Activated CD4-positive, alpha-beta memory T cell treated with anti-CD3 and anti-CD28 coated beads for 36 hours (primary cell): ENCODE measurements at regions of chr2 and their contacts with region 1.

Region 1: DNA sequence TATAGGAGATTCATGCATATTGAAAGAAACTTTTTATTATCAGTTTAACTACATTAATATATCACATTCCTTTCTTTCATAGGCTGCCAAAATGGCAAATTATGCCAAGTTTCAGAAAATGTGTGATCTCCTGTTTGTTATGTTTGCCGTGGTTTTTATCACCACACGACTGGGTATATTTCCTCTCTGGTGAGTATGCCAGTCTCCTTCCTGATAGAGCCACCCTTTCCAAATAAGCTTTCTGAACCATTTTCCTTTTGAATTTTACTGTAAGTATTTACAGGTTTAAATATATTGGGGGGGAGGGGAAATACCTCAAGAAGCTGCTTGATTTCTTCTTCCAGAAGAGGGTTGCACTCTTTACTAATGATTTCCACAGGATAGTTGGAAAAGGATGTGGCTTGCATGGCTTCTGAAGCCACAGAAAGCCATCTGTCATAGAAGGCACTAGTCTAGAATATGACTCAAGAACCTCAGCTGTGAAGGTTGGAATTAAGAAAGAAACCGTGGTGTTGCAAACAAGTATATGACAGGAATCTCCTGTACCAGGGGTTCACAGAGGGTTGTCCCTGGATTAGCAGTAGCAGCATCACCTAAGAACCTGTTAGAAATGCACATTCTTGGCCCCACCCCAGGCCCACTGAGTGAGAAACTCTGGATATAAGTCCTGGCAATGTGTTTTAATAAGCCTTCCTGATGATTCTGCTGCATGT is 84.5 kb upstream of the NOSTRIN start:
- DNase-seq: peak; percentile 29
- H3K4me3 Mint-ChIP-seq: no peak overlapping the region
- H3K27ac Mint-ChIP-seq: no peak overlapping the region
- H3K4me1 Mint-ChIP-seq: peaks cover 21% of the 10 kb centered on the region
- H3K27me3 Mint-ChIP-seq: no peaks in the 10 kb centered on the region

Region 2: GRCh38 chr2:168699844-168700417 is 18.0 kb before region 1 on chr2:
- CTCF ChIA-PET with region 1: no interaction called
- POLR2A ChIA-PET with region 1: no interaction called
- intact Hi-C with region 1: no loop called
- DNase-seq: no peak
- H3K4me3 Mint-ChIP-seq: no peak overlapping the region
- H3K27ac Mint-ChIP-seq: no peak overlapping the region
- H3K4me1 Mint-ChIP-seq: no peaks in the 10 kb centered on the region
- H3K27me3 Mint-ChIP-seq: no peaks in the 10 kb centered on the region

Region 3: DNA sequence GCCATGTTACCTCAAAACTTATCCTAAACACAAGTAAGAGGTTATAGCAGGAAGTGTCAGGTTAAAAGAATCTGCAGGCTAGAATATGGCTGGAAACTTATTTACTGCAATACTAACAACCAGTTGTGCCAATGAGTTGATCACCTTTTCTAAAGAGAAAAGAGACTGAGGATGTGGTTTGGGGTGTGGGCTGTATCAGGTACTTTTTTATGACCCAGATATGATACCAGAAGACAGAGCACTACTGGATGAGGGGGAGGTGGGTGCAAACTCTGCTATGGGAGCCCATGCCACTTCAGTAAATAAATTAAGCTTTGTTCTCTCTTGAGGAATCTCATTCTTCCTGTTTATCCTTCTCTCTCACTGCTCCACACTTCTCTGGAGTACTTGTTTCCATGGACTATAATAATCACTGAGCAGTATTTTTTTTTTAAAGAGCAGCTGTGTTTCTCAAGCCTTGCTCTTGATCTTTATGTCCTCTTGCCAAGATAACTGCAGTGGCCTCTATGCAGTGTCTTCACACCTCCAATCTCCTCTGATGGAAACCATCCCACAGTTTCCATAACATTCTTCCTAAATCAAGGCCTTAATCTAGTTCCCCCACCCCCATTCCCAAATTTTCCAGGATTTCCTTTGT is 33.3 kb after region 1 on chr2:
- CTCF ChIA-PET with region 1: no interaction called
- POLR2A ChIA-PET with region 1: no interaction called
- intact Hi-C with region 1: loop called (anchors 1 kb)
- DNase-seq: peak; percentile 49
- H3K4me3 Mint-ChIP-seq: no peak overlapping the region
- H3K27ac Mint-ChIP-seq: peak overlapping the region; percentile 3
- H3K4me1 Mint-ChIP-seq: peaks cover 62% of the 10 kb centered on the region
- H3K27me3 Mint-ChIP-seq: no peaks in the 10 kb centered on the region

Region 4: GRCh38 chr2:168948621-168949212 is 230.8 kb after region 1 on chr2:
- CTCF ChIA-PET with region 1: no interaction called
- POLR2A ChIA-PET with region 1: no interaction called
- intact Hi-C with region 1: no loop called
- DNase-seq: peak; percentile 10
- H3K4me3 Mint-ChIP-seq: no peak overlapping the region
- H3K27ac Mint-ChIP-seq: no peak overlapping the region
- H3K4me1 Mint-ChIP-seq: no peaks in the 10 kb centered on the region
- H3K27me3 Mint-ChIP-seq: peaks cover 3% of the 10 kb centered on the region